ENCODE measurements at regions of chr17 and their contacts with region 1.

Region 1: GRCh38 chr17:30124273-30124796 is 7.7 kb downstream of the NSRP1 start:
- DNase-seq: no peak
- H3K4me3 Mint-ChIP-seq: no peak overlapping the region
- H3K27ac Mint-ChIP-seq: no peak overlapping the region
- H3K4me1 Mint-ChIP-seq: peaks cover 39% of the 10 kb centered on the region
- H3K27me3 Mint-ChIP-seq: no peaks in the 10 kb centered on the region

Region 2: GRCh38 chr17:30062372-30062771 is 62.0 kb before region 1 on chr17:
- CTCF ChIA-PET with region 1: no interaction called
- POLR2A ChIA-PET with region 1: no interaction called
- DNase-seq: no peak
- H3K4me3 Mint-ChIP-seq: no peak overlapping the region
- H3K27ac Mint-ChIP-seq: no peak overlapping the region
- H3K4me1 Mint-ChIP-seq: no peaks in the 10 kb centered on the region
- H3K27me3 Mint-ChIP-seq: peaks cover 35% of the 10 kb centered on the region

Region 3: DNA sequence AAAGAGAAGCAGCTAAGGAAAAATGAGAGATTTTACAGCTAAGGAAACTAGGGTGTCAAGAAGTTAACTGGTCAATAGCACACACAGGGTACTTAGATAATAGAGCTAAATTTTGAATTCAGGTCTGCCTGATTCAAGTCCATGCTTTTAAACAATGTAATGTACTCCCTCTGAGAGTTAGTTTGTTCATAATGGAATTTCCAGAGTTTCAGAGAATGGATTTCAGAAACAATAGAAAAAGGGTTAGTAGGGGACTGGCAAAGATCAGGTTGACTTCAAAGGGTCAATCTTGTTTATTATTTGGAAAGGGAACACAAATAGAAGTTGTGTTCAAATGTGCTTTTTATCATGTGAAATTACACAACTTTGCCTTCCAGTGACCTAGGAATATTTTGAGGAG is 10.2 kb after region 1 on chr17:
- CTCF ChIA-PET with region 1: interaction called, 14 read pairs
- POLR2A ChIA-PET with region 1: no interaction called
- DNase-seq: no peak
- H3K4me3 Mint-ChIP-seq: no peak overlapping the region
- H3K27ac Mint-ChIP-seq: no peak overlapping the region
- H3K4me1 Mint-ChIP-seq: peaks cover 13% of the 10 kb centered on the region
- H3K27me3 Mint-ChIP-seq: no peaks in the 10 kb centered on the region